CD8-positive, alpha-beta T cell (primary cell): ENCODE measurements at regions of chr2 and their contacts with region 1.

Region 1: DNA sequence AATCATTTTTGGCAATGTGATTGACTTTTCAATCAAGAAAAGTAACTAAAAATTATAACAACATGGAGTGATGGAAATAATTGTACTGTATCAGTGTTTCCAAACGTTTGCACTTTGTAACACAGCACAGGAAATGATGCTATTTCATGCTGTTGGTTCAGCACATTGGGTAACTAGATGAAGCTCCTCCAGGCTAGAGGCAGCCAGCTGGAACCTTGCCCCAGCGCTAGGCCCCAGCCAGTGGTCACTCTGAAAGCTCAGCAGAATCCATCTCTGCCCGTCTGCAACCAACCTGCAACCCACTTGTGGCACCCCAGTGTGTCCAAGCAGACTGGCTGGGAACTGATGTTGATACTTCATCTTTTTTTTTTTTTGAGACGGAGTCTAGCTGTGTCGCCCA is 15.3 kb downstream of the UNC50 start:
- DNase-seq: no peak
- ATAC-seq: no peak
- H3K4me3 ChIP-seq: no peak overlapping the region
- H3K4me3 Mint-ChIP-seq: no peak overlapping the region
- H3K27ac ChIP-seq: no peak overlapping the region
- H3K27ac Mint-ChIP-seq: peak overlapping the region; percentile 88
- H3K4me1 ChIP-seq: peaks cover 2% of the 10 kb centered on the region
- H3K4me1 Mint-ChIP-seq: peaks cover 40% of the 10 kb centered on the region
- H3K27me3 ChIP-seq: no peaks in the 10 kb centered on the region
- H3K27me3 Mint-ChIP-seq: no peaks in the 10 kb centered on the region
- CTCF ChIP-seq: no peak

Region 2: DNA sequence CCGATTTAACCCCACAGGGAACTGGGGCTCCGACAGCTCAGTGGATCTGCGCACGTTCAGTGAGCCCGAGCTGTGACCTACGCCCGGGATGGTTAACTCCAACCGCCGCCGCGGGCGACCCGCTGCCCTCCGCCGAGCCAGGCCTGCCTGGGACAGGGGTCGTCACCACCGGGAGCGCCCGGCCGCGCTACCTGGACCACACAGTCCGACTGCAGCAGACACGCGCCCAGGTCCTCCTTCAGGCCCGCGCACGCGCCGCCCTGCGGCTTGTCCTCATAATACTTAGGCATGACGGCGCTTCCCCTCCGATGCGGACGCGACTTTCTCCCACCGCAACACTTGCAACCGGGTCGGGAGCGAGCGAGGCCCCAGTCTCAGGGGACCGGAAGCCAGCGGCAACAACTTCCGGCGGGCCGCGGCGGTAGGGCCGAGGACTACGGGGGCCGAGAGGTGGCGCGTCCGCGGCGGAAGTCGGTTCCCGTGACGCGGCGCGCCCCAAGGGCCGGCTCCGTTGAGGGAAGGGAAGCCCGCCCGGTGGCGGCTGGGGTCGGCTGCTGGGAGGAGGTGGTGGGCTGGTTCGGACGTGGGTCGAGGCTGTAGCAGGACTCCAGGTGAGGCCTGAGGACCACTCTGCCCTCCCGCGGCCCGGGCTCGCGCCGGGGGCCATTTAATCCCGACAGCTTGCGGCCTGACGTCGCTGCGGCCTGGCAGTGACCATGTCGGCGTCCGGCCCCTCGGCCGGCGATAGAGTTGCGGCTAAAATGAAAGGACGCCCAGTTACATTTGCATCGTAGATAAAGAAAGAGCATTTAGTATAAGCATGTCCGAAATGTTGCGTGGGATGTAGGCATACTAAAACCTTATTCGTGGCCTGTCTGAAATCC is 15.3 kb before region 1 on chr2 and contains the starts of genes COA5 and UNC50:
- CTCF ChIA-PET with region 1: no interaction called
- POLR2A ChIA-PET with region 1: interaction called, 12 read pairs
- intact Hi-C with region 1: loop called in 1 of 2 experiments (anchors 2 kb)
- DNase-seq: peak; percentile 84 to 95 (median 89)
- ATAC-seq: peak; percentile 81
- H3K4me3 ChIP-seq: peak within 1 kb of the TSS; percentile 84 to 94
- H3K4me3 Mint-ChIP-seq: peak within 1 kb of the TSS; percentile 89
- H3K27ac ChIP-seq: peak within 1 kb of the TSS; percentile 87 to 95
- H3K27ac Mint-ChIP-seq: peak within 1 kb of the TSS; percentile 95
- H3K4me1 ChIP-seq: peaks cover 48% of the 10 kb centered on the region
- H3K4me1 Mint-ChIP-seq: peaks cover 74% of the 10 kb centered on the region
- H3K27me3 ChIP-seq: no peaks in the 10 kb centered on the region
- H3K27me3 Mint-ChIP-seq: no peaks in the 10 kb centered on the region
- CTCF ChIP-seq: no peak
- total RNA-seq, gene COA5: 19.7 to 24.1 TPM
- total RNA-seq, gene UNC50: 12.5 to 14.4 TPM

Region 3: GRCh38 chr2:98634401-98635092 is 10.9 kb after region 1 on chr2:
- CTCF ChIA-PET with region 1: no interaction called
- POLR2A ChIA-PET with region 1: no interaction called
- intact Hi-C with region 1: loop called in 1 of 2 experiments (anchors 1 kb)
- DNase-seq: peak in 6 of 9 experiments; percentile 26 to 84 (median 64)
- ATAC-seq: peak; percentile 52
- H3K4me3 ChIP-seq: no peak overlapping the region
- H3K4me3 Mint-ChIP-seq: peak overlapping the region; percentile 63
- H3K27ac ChIP-seq: peak overlapping the region; percentile 12 to 87
- H3K27ac Mint-ChIP-seq: peak overlapping the region; percentile 96
- H3K4me1 ChIP-seq: peaks cover 49% of the 10 kb centered on the region
- H3K4me1 Mint-ChIP-seq: peaks cover 48% of the 10 kb centered on the region
- H3K27me3 ChIP-seq: no peaks in the 10 kb centered on the region
- H3K27me3 Mint-ChIP-seq: no peaks in the 10 kb centered on the region
- CTCF ChIP-seq: peak; percentile 54